Ovary (tissue), 10 donors: ENCODE measurements at regions of chr7 and their contacts with region 1.

Region 1: DNA sequence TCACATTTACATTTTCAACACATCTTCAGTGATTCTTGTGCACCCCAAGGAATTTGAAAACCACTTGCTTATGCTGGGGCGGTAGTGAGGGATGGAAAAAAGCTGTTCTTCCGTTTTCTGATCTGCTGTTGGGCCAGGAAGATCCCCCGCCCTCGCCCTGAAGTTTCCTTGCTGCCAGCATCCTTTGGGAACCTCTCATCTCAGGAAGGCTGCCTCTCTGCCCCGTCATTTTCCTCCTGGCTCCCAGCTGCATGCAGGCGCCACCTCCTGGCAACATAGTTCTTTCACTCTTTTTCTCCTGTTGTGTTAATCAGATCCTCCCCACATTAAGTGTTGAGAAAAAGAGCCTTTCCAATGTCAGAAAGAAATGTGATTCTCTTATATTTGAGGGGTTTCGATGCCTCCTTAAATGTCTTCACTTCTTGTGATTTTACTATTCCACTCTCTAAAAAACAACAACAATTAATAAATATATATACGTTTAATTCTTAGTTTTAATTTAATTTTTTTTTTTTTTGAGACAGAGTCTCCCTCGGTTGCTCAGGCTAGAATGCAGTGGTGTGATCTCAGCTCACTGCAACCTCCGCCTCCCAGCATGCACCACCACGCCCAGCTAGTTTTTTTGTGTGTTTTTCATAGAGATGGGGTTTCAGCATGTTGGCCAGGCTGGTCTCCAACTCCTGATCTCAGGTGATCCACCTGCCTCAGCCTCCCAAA is 122.9 kb downstream of the RALA start:
- DNase-seq: peak; percentile 62 to 80 (median 75)
- H3K4me3 ChIP-seq: no peak overlapping the region
- H3K27ac ChIP-seq: no peak overlapping the region
- H3K4me1 ChIP-seq: no peaks in the 10 kb centered on the region
- H3K27me3 ChIP-seq: no peaks in the 10 kb centered on the region
- CTCF ChIP-seq: peak; percentile 58 to 70 (median 70)
- EP300 ChIP-seq: no peak
- POLR2A ChIP-seq: no peak

Region 2: DNA sequence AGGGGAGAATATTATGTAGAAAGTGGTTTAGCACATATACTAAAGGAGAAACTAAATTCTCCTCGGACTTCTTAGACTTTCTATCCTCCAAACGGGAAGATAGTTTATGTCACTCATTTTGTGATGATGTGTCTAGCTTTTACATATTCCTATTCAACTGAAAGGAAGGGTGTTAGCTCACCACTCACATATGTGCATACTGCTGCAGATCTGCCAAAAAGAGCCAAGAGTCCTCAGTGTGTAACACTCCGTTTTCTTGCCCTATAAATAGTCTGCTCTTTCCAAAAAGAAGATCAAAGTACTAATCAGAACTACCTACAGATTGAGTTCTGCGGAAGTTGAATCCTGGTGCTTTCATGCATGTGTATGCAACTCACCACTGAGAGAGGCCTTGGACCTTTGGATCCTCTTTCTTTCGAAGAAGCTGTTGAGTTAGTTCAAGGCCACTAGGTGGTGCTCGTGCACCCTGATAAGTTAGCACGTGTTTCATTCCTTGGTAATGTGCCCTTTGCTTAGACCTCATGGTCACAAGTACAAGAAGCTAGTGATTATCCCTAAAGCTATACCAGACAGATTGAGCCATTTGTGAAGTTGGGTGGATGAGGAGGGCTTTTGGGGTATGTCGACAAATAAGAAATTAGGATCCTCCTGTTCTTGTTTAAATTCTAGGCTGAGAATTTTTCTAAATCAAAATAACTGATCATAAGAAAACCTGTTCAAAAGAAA is 165.9 kb before region 1 on chr7:
- intact Hi-C with region 1: loop called (anchors 1 to 5 kb)
- DNase-seq: peak; percentile 71 to 84 (median 77)
- H3K4me3 ChIP-seq: no peak overlapping the region
- H3K27ac ChIP-seq: no peak overlapping the region
- H3K4me1 ChIP-seq: no peaks in the 10 kb centered on the region
- H3K27me3 ChIP-seq: no peaks in the 10 kb centered on the region
- CTCF ChIP-seq: peak; percentile 67 to 78 (median 69)
- EP300 ChIP-seq: no peak
- POLR2A ChIP-seq: no peak

Region 3: DNA sequence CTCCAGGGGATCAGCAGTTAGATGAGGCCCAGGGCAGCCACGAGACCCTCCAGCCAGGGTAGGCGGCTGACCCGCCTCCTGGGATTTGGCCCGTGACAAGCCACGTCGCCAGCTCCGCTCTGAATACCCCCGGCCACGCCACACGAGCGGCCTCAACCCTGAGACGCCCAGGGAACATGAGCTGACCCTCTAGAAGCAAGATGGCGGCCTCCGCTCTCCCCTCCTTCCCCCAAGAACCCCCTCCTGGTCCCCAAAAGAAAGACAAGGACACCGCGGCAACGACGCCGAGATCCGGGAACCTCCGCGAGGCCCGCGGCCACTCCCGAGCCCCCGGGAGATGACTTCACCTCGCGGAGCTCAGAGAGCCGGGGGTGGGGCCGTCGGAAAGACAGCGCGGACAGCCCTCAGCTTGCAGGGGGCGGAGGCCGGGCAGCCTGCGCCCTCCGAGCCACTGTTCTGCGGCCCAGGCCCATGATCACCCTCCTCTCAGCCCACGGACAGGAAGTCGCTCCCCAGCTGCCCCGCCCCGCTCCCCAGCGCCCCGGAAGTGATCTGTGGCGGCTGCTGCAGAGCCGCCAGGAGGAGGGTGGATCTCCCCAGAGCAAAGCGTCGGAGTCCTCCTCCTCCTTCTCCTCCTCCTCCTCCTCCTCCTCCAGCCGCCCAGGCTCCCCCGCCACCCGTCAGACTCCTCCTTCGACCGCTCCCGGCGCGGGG is 123.1 kb before region 1 on chr7 and contains the start of gene RALA:
- intact Hi-C with region 1: loop called in 1 of 4 experiments (anchors 5 kb)
- DNase-seq: peak; percentile 91 to 94 (median 92)
- H3K4me3 ChIP-seq: peak within 1 kb of the TSS; percentile 82
- H3K27ac ChIP-seq: peak within 1 kb of the TSS; percentile 82 to 84
- H3K4me1 ChIP-seq: peaks cover 12% of the 10 kb centered on the region
- H3K27me3 ChIP-seq: no peaks in the 10 kb centered on the region
- CTCF ChIP-seq: no peak
- EP300 ChIP-seq: no peak
- POLR2A ChIP-seq: peak; percentile 65
- total RNA-seq, gene RALA: 13.9 to 32.9 (median 25.2) TPM